Activated CD4-positive, alpha-beta memory T cell treated with anti-CD3 and anti-CD28 coated beads, Interleukin-2, amount 10 ng/mL, durations not matched to agents 7 days and 5 days (primary cell): ENCODE measurements at regions of chr14 and their contacts with region 1.

Region 1: GRCh38 chr14:98189062-98189461 is 1082.9 kb downstream of the BCL11B start:
- DNase-seq: peak; percentile 67
- H3K4me3 Mint-ChIP-seq: peak overlapping the region; percentile 53
- H3K27ac Mint-ChIP-seq: peak overlapping the region; percentile 95
- H3K4me1 Mint-ChIP-seq: peaks cover 89% of the 10 kb centered on the region
- H3K27me3 Mint-ChIP-seq: no peaks in the 10 kb centered on the region

Region 2: DNA sequence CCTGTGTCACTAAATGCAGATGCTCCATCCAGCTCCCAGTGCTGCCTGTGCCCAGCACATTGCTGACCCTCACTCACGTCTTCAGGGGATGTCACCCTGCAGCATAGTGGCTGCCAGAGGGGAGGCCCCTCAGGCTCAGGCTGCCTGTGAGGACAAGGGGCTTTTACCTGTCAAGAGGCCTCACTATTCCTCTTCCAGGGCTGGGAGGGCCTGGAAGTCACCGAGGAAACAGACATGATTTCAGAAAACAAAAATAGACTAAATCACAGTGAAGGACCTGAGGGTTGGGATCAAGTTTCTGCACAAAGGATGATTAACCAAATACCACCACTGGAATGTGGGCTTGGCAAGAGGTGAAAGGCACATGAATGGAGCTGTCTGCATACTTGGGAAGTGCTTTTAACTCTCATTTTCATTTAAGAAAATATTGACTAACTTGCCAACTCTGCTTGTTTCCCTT is 119.3 kb before region 1 on chr14:
- CTCF ChIA-PET with region 1: no interaction called
- POLR2A ChIA-PET with region 1: no interaction called
- DNase-seq: no peak
- H3K4me3 Mint-ChIP-seq: no peak overlapping the region
- H3K27ac Mint-ChIP-seq: no peak overlapping the region
- H3K4me1 Mint-ChIP-seq: no peaks in the 10 kb centered on the region
- H3K27me3 Mint-ChIP-seq: peaks cover 2% of the 10 kb centered on the region

Region 3: DNA sequence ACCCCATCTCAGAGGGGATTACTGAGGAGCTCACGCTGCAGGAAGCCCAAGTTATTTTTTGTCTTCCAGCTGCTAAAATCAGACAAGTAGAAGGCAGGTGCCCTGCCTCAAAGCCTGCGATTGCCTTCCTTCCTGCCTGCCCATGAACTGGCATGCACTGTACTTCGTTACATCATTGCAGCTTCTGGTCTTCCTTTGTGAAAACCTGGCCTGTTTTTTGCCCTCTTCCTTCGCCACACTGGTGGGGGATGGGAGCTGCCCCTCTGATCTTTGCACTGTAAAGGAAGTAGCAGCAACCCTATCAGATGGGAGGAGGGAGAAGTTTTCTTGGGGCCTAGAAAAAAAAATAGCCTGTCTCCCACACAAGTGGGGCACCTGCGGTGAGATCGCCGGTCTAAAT is 15.8 kb before region 1 on chr14:
- CTCF ChIA-PET with region 1: interaction called, 21 read pairs
- POLR2A ChIA-PET with region 1: interaction called, 244 read pairs
- DNase-seq: peak; percentile 62
- H3K4me3 Mint-ChIP-seq: peak overlapping the region; percentile 40
- H3K27ac Mint-ChIP-seq: peak overlapping the region; percentile 86
- H3K4me1 Mint-ChIP-seq: peaks cover 92% of the 10 kb centered on the region
- H3K27me3 Mint-ChIP-seq: no peaks in the 10 kb centered on the region

Region 4: DNA sequence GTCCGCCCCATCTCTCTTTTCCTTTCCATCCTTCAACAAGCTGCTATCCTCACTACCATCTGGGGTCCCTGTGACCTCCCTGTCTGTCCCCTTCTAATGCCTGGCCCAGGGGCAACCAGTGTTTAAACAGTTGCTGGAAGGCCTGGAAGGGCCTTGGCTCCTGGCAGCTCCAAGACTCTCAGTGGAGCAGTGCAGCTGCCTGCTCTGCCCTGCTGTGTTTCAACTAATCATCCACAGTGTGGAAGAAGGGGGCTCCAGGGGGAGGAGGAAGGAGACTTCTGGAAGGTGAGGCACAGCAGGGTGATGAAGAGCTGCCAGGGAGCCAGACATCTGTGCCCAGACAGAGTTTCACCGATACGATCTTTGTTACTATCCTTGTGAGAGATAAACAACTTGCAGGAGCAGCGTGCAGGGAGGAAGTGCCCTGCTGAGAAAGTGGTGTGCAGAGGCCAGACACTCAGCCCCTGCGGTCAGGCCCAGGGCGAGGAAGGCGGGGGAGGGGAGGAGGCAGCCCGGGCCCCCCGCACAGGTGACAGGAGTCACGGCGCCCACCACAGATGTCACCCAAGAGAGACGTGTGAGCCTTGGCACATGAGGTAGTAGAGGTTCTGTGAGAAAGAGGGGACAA is 21.1 kb after region 1 on chr14:
- CTCF ChIA-PET with region 1: no interaction called
- POLR2A ChIA-PET with region 1: interaction called, 23 read pairs
- DNase-seq: peak; percentile 48
- H3K4me3 Mint-ChIP-seq: peak overlapping the region; percentile 45
- H3K27ac Mint-ChIP-seq: peak overlapping the region; percentile 81
- H3K4me1 Mint-ChIP-seq: peaks cover 53% of the 10 kb centered on the region
- H3K27me3 Mint-ChIP-seq: peaks cover 2% of the 10 kb centered on the region

Region 5: GRCh38 chr14:99230208-99231151 is 1041.4 kb after region 1 on chr14:
- CTCF ChIA-PET with region 1: interaction called, 3 read pairs
- POLR2A ChIA-PET with region 1: interaction called, 10 read pairs
- DNase-seq: peak; percentile 93
- H3K4me3 Mint-ChIP-seq: peak overlapping the region; percentile 73
- H3K27ac Mint-ChIP-seq: peak overlapping the region; percentile 99
- H3K4me1 Mint-ChIP-seq: peaks cover 94% of the 10 kb centered on the region
- H3K27me3 Mint-ChIP-seq: no peaks in the 10 kb centered on the region